ENCODE measurements at regions of chr15 and their contacts with region 1.

Region 1: GRCh38 chr15:78108299-78109084 is 16.1 kb downstream of the SH2D7 start:
- DNase-seq: peak; percentile 71 to 95
- H3K4me3 ChIP-seq: no peak overlapping the region
- CTCF ChIP-seq: peak in 1 of 3 donors; percentile 94
- POLR2A ChIP-seq: no peak

Region 2: GRCh38 chr15:77966540-77967290 is 141.8 kb before region 1 on chr15:
- intact Hi-C with region 1: loop called (anchors 5 kb)
- DNase-seq: peak in 1 of 2 donors; percentile 72
- H3K4me3 ChIP-seq: no peak overlapping the region
- CTCF ChIP-seq: peak in 1 of 3 donors; percentile 59
- POLR2A ChIP-seq: no peak

Region 3: DNA sequence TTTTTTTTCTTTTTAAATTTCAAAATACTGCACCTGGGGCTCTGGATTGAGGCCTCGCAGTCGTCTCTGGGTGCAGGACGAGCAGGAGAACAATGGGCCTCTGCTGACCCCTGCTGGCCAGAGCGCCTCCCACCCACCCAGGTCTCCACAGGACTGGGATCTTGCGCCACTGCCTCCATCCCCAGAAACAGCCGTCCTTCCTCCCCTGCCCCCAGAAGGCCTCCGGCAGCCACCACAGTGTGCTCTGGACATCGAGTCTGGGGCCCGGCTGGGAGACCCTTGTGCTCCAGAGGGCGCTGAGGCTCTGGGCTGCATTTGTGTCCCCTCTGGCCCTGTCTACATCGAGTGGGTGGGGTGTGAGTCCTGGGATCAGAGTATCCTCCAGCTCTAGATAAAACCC is 132.5 kb after region 1 on chr15:
- intact Hi-C with region 1: loop called (anchors 5 kb)
- DNase-seq: peak; percentile 76 to 98
- H3K4me3 ChIP-seq: no peak overlapping the region
- CTCF ChIP-seq: peak in 2 of 3 donors; percentile 5 to 44
- POLR2A ChIP-seq: no peak